Left ventricle myocardium superior (tissue), 1 donor: ENCODE measurements at regions of chr17 and their contacts with region 1.

Region 1: DNA sequence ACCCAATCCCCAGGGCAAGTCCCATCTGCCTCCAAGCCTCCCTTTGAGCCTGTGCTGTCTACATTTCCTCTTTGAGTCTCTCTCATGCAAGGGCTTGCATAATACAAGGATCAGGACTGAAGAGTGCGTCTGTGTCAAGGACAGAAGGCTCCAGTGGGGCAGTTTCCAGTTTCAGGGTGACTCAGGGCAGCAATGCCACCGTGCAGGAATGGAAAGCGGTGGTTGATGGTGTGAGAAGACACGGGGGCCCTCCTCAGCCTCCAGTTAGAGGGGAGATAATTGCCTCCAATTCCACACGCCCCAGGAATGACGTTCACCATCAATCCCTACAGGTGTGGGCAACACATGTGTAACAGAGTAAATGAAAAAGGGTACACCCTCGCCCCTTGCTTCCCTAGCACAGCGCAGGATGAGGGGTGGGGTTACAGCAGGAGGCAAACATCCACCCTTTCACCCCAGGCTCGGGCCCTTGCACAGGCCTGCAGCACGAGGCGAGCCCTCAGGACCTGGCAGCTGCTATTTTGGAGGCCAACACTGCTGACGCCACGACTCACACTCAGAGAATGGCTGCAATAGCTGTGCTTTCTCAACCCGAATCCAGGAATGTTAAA is 24.8 kb upstream of the SLC25A19 start:
- DNase-seq: peak; percentile 34
- ATAC-seq: peak; percentile 62

Region 2: GRCh38 chr17:76166168-76166567 is 852.1 kb after region 1 on chr17:
- intact Hi-C with region 1: loop called (anchors 5 kb)
- DNase-seq: no peak
- ATAC-seq: no peak